ENCODE measurements at regions of chrX and their contacts with region 1.

Region 1: DNA sequence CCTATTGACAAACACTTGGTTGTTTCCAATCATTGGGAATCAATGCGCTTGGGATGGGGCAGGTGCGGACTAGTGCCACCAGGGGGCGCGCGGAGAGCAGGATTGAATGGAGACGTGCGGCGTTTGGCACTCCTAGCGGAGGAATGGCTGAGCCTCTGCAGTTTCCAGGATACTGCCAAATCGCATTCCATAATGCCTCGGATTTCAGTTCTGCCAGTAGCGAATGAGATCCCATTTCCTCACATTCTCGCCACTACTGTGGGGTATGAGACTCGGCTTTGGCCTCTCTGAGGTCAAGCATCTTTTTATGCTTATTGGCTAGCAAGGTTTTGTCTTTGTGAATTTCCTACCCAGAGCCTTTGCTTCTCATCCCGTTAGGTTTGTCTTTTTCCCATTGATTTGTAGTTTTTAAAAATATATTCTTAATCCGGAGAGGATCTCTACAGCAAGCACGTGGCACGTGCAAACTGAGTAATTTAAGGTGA is 28.7 kb downstream of the CLDN34 start:
- DNase-seq: peak; percentile 89
- H3K4me3 ChIP-seq: no peak overlapping the region
- H3K27ac ChIP-seq: no peak overlapping the region
- H3K4me1 ChIP-seq: no peaks in the 10 kb centered on the region
- H3K27me3 ChIP-seq: no peaks in the 10 kb centered on the region
- CTCF ChIP-seq: peak; percentile 84 to 98 (median 95)
- POLR2A ChIP-seq: no peak

Region 2: DNA sequence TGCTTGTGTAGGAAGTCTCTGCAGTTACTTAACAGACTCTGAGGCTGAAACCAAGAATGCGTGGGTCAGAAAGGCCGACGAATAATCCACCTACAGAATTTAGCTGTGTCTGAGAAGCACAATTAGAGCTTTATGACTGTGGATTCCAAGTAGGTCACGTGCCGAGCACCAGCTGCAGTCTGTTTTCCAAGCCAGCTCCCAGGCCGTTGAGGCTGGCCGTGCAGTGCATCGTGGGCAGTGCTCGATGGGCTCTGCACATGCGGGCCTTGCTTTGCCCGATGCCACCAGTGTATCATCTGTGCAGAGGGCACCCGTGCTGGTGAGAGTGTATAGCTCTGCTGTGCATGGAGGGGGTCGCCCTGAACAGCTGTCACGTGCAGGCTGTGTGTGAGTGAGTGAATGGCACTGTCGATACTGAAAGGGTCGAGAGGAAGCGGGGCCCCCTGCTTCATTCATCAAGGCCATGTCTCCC is 96.2 kb before region 1 on chrX:
- intact Hi-C with region 1: no loop called
- DNase-seq: peak; percentile 81
- H3K4me3 ChIP-seq: no peak overlapping the region
- H3K27ac ChIP-seq: no peak overlapping the region
- H3K4me1 ChIP-seq: no peaks in the 10 kb centered on the region
- H3K27me3 ChIP-seq: no peaks in the 10 kb centered on the region
- CTCF ChIP-seq: no peak
- POLR2A ChIP-seq: no peak

Region 3: DNA sequence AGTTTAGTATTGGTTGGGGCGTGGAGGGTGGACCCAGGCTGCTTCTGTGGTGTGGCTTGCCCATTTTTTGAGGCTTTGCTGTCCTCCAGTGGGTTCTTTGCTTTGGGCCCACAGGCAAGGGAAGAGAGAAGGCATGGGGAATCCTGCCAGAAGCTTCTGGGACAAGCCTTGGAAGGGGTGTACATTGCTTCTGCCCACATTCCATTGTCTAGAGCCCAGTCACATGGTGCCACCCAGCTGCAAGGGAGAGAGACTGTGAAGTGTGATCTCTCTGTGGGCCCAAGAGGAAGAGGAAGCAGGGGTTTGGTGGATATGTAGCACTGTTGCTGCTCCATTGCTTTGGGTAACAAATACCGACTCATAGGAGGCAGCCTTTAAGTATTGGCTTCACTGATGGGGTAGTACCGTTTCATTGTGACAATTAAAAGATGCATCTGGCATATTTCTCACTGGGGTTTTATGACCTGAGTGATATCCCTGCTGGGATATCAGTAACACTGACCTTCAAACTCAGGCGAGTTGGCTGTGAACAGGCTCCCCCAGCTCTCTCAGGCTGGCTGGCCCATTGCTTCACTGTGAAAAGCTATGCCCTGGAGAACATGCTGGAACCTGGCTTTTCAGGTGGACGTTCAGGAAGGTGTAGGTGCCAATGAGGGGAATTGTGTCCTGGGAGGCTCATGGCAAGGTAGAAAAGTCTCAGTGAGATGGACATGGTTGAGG is 57.2 kb after region 1 on chrX:
- intact Hi-C with region 1: no loop called
- DNase-seq: no peak
- H3K4me3 ChIP-seq: no peak overlapping the region
- H3K27ac ChIP-seq: no peak overlapping the region
- H3K4me1 ChIP-seq: peaks cover 5% of the 10 kb centered on the region
- H3K27me3 ChIP-seq: no peaks in the 10 kb centered on the region
- CTCF ChIP-seq: no peak
- POLR2A ChIP-seq: no peak

Region 4: DNA sequence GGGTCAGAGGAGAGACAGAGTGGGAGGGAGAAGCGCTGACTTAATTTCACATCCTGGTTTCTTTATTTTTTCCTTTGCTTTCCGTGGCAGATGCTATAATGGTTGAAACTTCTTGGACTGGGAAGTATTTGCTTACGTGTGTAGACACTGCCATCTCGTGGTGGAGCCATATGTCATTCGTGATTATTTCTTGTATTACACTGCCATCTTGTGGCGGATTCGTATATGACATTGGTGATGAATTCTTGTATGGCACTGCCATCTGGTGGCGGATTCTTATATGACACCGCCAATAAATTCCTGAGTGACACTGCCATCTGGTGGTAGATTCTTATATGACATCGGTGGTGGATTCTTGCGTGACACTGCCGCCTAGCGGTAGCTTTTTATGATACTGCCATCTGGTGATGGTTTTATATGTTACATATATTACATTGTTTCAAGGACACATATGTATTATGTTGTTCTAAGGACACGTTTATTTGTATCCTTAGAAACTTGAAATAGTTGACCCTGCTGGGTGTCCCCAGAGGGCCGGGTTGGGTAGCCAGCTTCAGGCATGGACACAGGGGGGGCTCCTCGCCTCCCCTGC is 123.6 kb after region 1 on chrX:
- intact Hi-C with region 1: loop called (anchors 5 kb)
- DNase-seq: peak; percentile 87
- H3K4me3 ChIP-seq: no peak overlapping the region
- H3K27ac ChIP-seq: no peak overlapping the region
- H3K4me1 ChIP-seq: peaks cover 3% of the 10 kb centered on the region
- H3K27me3 ChIP-seq: no peaks in the 10 kb centered on the region
- CTCF ChIP-seq: peak; percentile 99 to 100 (median 100)
- POLR2A ChIP-seq: no peak